ENCODE measurements at regions of chr4 and their contacts with region 1.

Region 1: DNA sequence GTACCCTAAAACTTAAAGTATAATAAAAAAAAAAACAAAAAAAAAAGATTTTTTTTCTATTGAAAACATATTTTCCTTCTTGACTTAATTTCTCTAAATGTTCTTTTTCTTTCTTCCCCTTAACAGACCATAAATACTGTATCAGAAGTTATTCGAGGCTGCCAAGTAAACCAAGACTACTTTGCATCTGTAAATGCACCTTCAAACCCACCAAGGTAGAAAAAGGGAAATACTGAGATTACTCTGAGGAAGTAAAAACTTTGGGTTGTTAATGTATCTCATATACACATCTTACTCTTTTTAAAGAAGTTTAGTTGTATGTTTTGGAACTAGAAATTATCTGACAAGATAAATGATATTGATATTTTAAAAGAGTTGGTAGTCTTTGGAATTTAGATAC is 65.6 kb downstream of the USO1 start:
- DNase-seq: no peak
- H3K4me3 ChIP-seq: no peak overlapping the region
- H3K27ac ChIP-seq: no peak overlapping the region
- H3K4me1 ChIP-seq: no peaks in the 10 kb centered on the region
- H3K27me3 ChIP-seq: no peaks in the 10 kb centered on the region
- CTCF ChIP-seq: no peak
- EP300 ChIP-seq: no peak
- POLR2A ChIP-seq: no peak

Region 2: GRCh38 chr4:75653845-75654503 is 136.1 kb before region 1 on chr4:
- intact Hi-C with region 1: loop called (anchors 10 kb)
- DNase-seq: no peak
- H3K4me3 ChIP-seq: no peak overlapping the region
- H3K27ac ChIP-seq: no peak overlapping the region
- H3K4me1 ChIP-seq: peaks cover 0 to 5% (median 3%) of the 10 kb centered on the region in 4 donors
- H3K27me3 ChIP-seq: no peaks in the 10 kb centered on the region
- CTCF ChIP-seq: peak; percentile 46 to 56 (median 50)
- EP300 ChIP-seq: no peak
- POLR2A ChIP-seq: no peak

Region 3: GRCh38 chr4:75745161-75745560 is 44.9 kb before region 1 on chr4:
- intact Hi-C with region 1: no loop called
- DNase-seq: no peak
- H3K4me3 ChIP-seq: no peak overlapping the region
- H3K27ac ChIP-seq: no peak overlapping the region
- H3K4me1 ChIP-seq: peaks cover 7 to 20% (median 12%) of the 10 kb centered on the region in 4 donors
- H3K27me3 ChIP-seq: no peaks in the 10 kb centered on the region
- CTCF ChIP-seq: no peak
- EP300 ChIP-seq: no peak
- POLR2A ChIP-seq: no peak

Region 4: GRCh38 chr4:75892508-75892907 is 102.5 kb after region 1 on chr4:
- intact Hi-C with region 1: no loop called
- DNase-seq: no peak
- H3K4me3 ChIP-seq: no peak overlapping the region
- H3K27ac ChIP-seq: no peak overlapping the region
- H3K4me1 ChIP-seq: no peaks in the 10 kb centered on the region
- H3K27me3 ChIP-seq: no peaks in the 10 kb centered on the region
- CTCF ChIP-seq: no peak
- EP300 ChIP-seq: no peak
- POLR2A ChIP-seq: no peak

Region 5: DNA sequence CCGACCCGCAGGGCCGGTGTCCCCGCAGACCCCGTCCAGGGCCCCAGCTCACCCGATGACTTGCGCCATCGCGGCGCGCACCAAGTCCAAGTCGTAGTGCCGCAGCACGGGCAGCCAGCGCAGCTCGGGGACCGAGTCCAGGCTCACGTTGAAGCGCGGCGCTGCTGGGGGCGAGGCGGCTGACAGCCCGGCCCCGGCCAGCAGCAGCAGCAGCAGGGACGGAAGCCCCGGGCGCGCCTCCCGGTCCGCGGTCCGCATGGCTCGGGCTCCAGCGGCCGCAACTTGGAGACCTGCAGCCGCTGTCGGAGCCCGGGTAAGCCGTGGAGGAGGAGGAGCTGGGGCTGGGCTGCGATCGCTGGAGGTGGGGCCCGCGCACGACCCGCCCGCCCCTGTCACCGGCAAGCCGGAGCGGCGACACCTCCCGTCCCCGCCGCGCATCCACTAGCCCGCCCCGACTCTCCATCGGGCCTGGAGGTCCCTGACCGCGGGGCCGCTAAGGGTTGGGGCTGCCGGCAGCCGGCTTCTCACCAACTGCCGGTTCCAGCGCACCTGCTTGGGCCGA is 150.7 kb after region 1 on chr4 and contains the start of gene NAAA:
- intact Hi-C with region 1: loop called (anchors 10 kb)
- DNase-seq: no peak
- H3K4me3 ChIP-seq: peak within 1 kb of the TSS; percentile 71 to 84 (median 79)
- H3K27ac ChIP-seq: peak within 1 kb of the TSS; percentile 66 to 85 (median 72)
- H3K4me1 ChIP-seq: peaks cover 4 to 19% (median 14%) of the 10 kb centered on the region in 4 donors
- H3K27me3 ChIP-seq: no peaks in the 10 kb centered on the region
- CTCF ChIP-seq: peak; percentile 31 to 64 (median 43)
- EP300 ChIP-seq: no peak
- POLR2A ChIP-seq: no peak
- total RNA-seq, gene NAAA: 20.7 to 55.7 (median 26.6) TPM